RWPE1 (cell line): ENCODE measurements at regions of chr11 and their contacts with region 1.

Region 1: DNA sequence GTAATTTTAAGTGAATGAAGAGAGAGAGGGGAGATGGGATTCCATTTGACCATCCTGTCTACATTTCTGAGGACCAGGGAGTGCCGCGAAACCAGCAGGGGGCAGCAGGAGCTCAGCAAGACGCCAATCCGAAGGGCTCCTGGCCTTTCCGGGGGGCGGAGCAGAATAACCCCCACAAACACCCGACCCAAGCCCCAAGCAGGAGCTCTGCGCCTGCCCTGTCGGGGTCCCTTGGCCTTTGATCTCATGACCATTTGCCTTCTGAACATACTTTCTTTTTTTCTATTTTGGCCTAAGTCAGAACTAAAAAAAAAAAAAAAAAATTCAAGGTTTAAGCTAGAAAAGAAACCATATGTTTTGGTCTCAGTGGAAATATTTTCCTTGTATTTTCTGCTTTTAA is 21.9 kb upstream of the SCN2B start:
- DNase-seq: peak; percentile 60
- H3K27ac ChIP-seq: no peak overlapping the region
- CTCF ChIP-seq: peak; percentile 86

Region 2: GRCh38 chr11:118088477-118088920 is 109.9 kb before region 1 on chr11:
- CTCF ChIA-PET with region 1: no interaction called
- POLR2A ChIA-PET with region 1: no interaction called
- DNase-seq: no peak
- H3K27ac ChIP-seq: no peak overlapping the region
- CTCF ChIP-seq: no peak

Region 3: DNA sequence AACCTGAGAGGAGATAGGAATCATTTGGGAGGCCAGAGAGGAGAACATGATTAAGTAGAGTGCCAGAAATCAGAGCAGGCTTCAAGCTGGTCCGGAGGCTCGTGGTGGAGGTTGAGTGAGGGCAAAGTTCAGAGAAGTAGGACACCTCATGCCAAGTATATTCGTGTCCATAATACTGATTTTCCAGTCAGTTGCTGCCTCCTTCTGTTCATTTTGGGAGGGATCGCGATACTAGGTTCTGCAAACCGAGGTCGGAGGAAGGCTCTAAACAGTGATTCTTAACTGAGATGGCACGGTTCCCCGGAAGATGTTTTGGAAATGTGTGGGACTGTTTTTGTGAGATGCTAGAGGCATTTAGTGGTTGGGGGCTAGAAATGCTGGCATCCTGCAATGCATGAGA is 92.6 kb after region 1 on chr11:
- CTCF ChIA-PET with region 1: interaction called, 13 read pairs
- POLR2A ChIA-PET with region 1: no interaction called
- DNase-seq: peak; percentile 62
- H3K27ac ChIP-seq: no peak overlapping the region
- CTCF ChIP-seq: peak; percentile 46